ENCODE measurements at regions of chr5 and their contacts with region 1.

Region 1: GRCh38 chr5:34474573-34475021 is 181.5 kb upstream of the RAI14 start:
- DNase-seq: no peak
- H3K4me3 ChIP-seq: no peak overlapping the region
- H3K27ac ChIP-seq: no peak overlapping the region
- H3K4me1 ChIP-seq: no peaks in the 10 kb centered on the region
- H3K27me3 ChIP-seq: no peaks in the 10 kb centered on the region
- CTCF ChIP-seq: peak; percentile 64 to 94 (median 92)
- EP300 ChIP-seq: no peak
- POLR2A ChIP-seq: no peak

Region 2: DNA sequence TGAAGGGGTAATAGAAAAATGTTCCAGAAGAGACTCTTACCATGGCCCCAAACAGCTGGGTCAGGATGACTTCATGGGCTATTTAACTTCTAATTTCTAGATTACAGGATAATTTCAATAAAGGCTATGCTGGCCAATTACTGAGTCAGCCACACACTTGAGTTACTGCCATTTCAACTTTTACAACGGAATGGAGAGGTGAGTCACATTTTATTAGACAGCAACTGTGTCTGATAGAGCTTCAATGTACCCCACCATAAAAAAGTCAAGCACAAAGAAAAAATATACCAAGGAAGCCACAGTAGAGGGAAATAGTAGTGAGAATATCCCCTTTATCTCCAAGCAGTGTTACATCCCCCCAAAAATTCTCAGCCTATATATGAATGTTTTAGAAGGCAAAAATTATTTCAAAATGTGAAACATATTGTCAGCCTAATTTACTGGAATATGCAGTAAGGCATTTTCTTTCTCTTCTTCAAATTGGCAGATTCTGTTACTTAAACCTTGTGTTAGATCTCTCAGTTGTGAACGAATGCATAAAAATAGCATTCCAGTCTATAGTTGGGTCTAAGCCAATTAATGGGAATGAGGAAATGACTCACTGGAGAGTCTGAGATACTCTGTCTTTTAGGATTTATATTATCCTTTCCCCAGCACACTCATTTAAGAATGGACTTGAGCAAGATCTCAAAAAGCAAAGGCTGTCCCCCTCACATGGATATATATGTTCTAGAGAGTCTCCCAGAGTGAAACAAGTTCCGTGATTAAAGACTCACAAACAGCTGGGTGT is 134.5 kb after region 1 on chr5:
- intact Hi-C with region 1: no loop called
- DNase-seq: no peak
- H3K4me3 ChIP-seq: no peak overlapping the region
- H3K27ac ChIP-seq: peak overlapping the region; percentile 61 to 82 (median 74)
- H3K4me1 ChIP-seq: peaks cover 0 to 29% (median 14%) of the 10 kb centered on the region in 4 donors
- H3K27me3 ChIP-seq: no peaks in the 10 kb centered on the region
- CTCF ChIP-seq: no peak
- EP300 ChIP-seq: peak in 2 of 4 donors; percentile 14 to 36
- POLR2A ChIP-seq: no peak

Region 3: DNA sequence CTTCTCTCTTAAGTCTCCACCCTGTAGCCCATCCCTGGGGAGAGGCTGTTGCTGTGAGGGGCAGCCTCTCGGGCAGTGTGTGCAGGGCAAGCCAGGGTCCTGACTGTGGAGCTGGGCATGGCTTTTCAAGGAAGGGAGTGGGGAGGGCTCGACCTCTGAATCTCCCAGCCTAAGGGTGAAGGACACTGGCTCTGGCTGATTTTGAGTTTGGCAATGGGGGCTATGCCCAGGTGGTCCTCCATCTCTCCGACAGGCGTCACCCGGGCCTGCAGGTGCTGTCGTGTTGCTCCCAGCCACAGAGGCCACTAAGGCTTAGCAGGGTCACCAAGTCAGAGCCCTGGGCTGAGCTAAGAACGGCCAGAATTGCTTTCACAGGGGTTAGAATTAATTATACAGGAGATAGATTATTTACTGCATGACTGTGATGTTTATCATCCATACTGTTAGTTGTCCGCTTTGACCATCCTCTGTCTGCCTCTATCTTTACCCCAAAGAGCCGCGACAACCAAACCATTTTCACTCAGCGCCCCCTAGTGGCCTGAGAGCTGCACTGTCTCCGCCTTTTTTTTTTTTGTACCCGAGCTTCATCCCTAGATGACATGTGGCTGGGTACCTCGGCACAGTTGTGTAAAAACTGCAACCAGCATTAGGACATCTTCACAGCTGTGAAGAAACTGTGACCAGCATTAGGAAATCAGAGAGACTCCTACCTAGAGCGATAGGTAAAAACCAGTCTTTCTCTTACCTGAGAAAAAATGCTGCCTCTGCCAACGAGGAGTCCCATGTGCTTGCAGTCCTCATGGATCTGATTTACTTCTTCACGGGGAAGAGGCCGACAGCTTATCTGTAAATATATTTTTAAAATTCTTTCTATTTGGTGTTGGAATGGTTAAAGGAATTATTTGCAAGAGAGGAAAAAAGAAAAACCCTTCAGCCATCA is 528.7 kb after region 1 on chr5:
- intact Hi-C with region 1: loop called (anchors 5 kb)
- DNase-seq: no peak
- H3K4me3 ChIP-seq: no peak overlapping the region
- H3K27ac ChIP-seq: no peak overlapping the region
- H3K4me1 ChIP-seq: no peaks in the 10 kb centered on the region
- H3K27me3 ChIP-seq: no peaks in the 10 kb centered on the region
- CTCF ChIP-seq: peak in 3 of 4 experiments; percentile 18 to 77 (median 40)
- EP300 ChIP-seq: no peak
- POLR2A ChIP-seq: no peak